ENCODE measurements at regions of chr11 and their contacts with region 1.

Region 1: DNA sequence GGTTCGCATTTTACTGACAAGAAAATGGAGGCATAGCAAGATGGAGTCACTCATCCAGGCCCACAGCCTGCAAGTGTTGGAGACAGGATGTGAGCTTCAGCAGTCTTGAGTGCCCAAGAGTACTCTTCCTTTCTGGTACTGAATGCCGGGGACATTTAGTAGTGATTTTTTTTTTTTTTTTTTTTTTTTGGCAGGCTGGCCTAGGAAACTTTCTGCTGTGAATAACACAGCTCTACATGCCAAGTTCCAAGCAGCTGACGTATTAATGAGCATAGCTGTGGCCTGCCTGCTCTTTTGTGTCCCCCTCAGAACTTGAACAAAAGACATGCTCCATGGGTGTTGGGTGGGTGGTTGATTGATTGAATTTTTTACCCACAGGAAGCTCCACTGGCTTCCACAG is 195.5 kb upstream of the CADM1 start:
- DNase-seq: peak; percentile 53
- H3K4me3 ChIP-seq: no peak overlapping the region
- H3K27me3 ChIP-seq: no peaks in the 10 kb centered on the region; the same call in 1 of the 2 replicates
- CTCF ChIP-seq: no peak

Region 2: GRCh38 chr11:113818426-113818825 is 1881.3 kb before region 1 on chr11:
- CTCF ChIA-PET with region 1: no interaction called
- POLR2A ChIA-PET with region 1: interaction called, 16 read pairs
- DNase-seq: no peak
- H3K4me3 ChIP-seq: no peak overlapping the region
- H3K27me3 ChIP-seq: no peaks in the 10 kb centered on the region
- CTCF ChIP-seq: no peak

Region 3: GRCh38 chr11:115544422-115544948 is 155.2 kb before region 1 on chr11:
- CTCF ChIA-PET with region 1: no interaction called
- POLR2A ChIA-PET with region 1: no interaction called
- DNase-seq: no peak
- H3K4me3 ChIP-seq: no peak overlapping the region
- H3K27me3 ChIP-seq: no peaks in the 10 kb centered on the region
- CTCF ChIP-seq: no peak

Region 4: GRCh38 chr11:115682101-115682500 is 17.6 kb before region 1 on chr11:
- CTCF ChIA-PET with region 1: no interaction called
- POLR2A ChIA-PET with region 1: no interaction called
- DNase-seq: no peak
- H3K4me3 ChIP-seq: no peak overlapping the region
- H3K27me3 ChIP-seq: 0 out of 2 replicates have a peak, but pooled peaks cover 1% of the 10 kb centered on the region
- CTCF ChIP-seq: no peak

Measured in BJ (cell line).